Activated CD8-positive, alpha-beta memory T cell treated with anti-CD3 and anti-CD28 coated beads, Interleukin-2, amount 10 ng/mL, durations not matched to agents 7 days and 5 days (primary cell): ENCODE measurements at regions of chr3 and their contacts with region 1.

Region 1: GRCh38 chr3:157081681-157082210 is 78.2 kb downstream of the CCNL1 start:
- DNase-seq: peak; percentile 91
- ATAC-seq: peak; percentile 95
- H3K4me3 Mint-ChIP-seq: no peak overlapping the region
- H3K27ac Mint-ChIP-seq: peak overlapping the region; percentile 38
- H3K4me1 Mint-ChIP-seq: peaks cover 40% of the 10 kb centered on the region
- H3K27me3 Mint-ChIP-seq: no peaks in the 10 kb centered on the region

Region 2: GRCh38 chr3:156685198-156685597 is 396.5 kb before region 1 on chr3:
- CTCF ChIA-PET with region 1: interaction called, 10 read pairs
- DNase-seq: no peak
- ATAC-seq: no peak
- H3K4me3 Mint-ChIP-seq: peak overlapping the region; percentile 15
- H3K27ac Mint-ChIP-seq: peak overlapping the region; percentile 63
- H3K4me1 Mint-ChIP-seq: peaks cover 85% of the 10 kb centered on the region
- H3K27me3 Mint-ChIP-seq: no peaks in the 10 kb centered on the region

Region 3: GRCh38 chr3:156952011-156952410 is 129.7 kb before region 1 on chr3:
- CTCF ChIA-PET with region 1: no interaction called
- DNase-seq: no peak
- ATAC-seq: no peak
- H3K4me3 Mint-ChIP-seq: no peak overlapping the region
- H3K27ac Mint-ChIP-seq: no peak overlapping the region
- H3K4me1 Mint-ChIP-seq: peaks cover 3% of the 10 kb centered on the region
- H3K27me3 Mint-ChIP-seq: peaks cover 13% of the 10 kb centered on the region

Region 4: DNA sequence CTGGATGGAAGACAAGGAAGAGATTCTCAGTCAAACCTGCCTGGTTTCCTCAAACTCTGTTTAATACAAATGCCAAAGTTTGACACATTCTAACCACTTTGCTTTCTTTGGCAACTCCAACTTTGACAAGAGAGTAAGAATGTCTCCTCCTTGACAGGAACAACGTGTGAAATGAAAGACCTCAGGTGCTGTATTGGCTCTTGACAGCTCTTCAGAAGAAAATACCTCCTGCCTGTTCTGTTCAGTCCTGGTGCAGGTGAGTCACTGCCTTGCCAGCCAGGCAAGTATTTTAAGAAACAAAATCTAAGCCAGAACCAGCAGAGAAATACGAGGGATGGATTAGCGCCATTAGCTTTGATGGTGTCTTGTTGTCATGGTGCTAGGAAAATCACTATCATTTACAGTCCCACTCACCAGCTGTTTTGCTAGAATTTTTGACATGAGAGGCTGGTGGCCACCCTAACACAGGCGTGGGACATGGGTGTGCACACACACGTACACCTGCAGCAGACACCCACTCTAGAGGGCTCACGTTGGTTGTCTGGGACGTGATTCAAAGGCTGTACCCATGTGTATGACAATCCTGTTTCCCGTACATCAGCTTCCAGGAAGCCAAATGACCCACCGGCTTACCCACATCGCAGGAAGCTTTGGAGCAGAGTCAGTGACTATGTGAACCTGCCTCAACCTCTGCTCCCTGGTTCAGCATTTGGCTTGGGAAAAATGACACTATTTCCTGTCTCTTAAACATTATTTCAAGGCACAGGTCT is 17.8 kb after region 1 on chr3:
- CTCF ChIA-PET with region 1: interaction called, 11 read pairs
- DNase-seq: no peak
- ATAC-seq: no peak
- H3K4me3 Mint-ChIP-seq: no peak overlapping the region
- H3K27ac Mint-ChIP-seq: peak overlapping the region; percentile 52
- H3K4me1 Mint-ChIP-seq: peaks cover 59% of the 10 kb centered on the region
- H3K27me3 Mint-ChIP-seq: no peaks in the 10 kb centered on the region

Region 5: GRCh38 chr3:157130467-157131251 is 48.9 kb after region 1 on chr3:
- CTCF ChIA-PET with region 1: interaction called, 332 read pairs
- DNase-seq: peak; percentile 86
- ATAC-seq: peak; percentile 32
- H3K4me3 Mint-ChIP-seq: peak overlapping the region; percentile 59
- H3K27ac Mint-ChIP-seq: peak overlapping the region; percentile 96
- H3K4me1 Mint-ChIP-seq: peaks cover 83% of the 10 kb centered on the region
- H3K27me3 Mint-ChIP-seq: no peaks in the 10 kb centered on the region

Region 6: GRCh38 chr3:157166561-157166960 is 84.8 kb after region 1 on chr3:
- CTCF ChIA-PET with region 1: no interaction called
- DNase-seq: no peak
- ATAC-seq: no peak
- H3K4me3 Mint-ChIP-seq: no peak overlapping the region
- H3K27ac Mint-ChIP-seq: no peak overlapping the region
- H3K4me1 Mint-ChIP-seq: peaks cover 5% of the 10 kb centered on the region
- H3K27me3 Mint-ChIP-seq: no peaks in the 10 kb centered on the region